Activated T-helper 1 cell treated with anti-CD3 and anti-CD28 coated beads, Interleukin-12 subunit alpha, Interleukin-12 subunit beta, Interleukin-2, Interleukin-4 antibody, amounts not matched to agents 30 ng/mL and 10 ng/mL and 1 ng/mL, durations not matched to agents 14 hours and 24 hours and 36 hours (primary cell): ENCODE measurements at regions of chr10 and their contacts with region 1.

Region 1: DNA sequence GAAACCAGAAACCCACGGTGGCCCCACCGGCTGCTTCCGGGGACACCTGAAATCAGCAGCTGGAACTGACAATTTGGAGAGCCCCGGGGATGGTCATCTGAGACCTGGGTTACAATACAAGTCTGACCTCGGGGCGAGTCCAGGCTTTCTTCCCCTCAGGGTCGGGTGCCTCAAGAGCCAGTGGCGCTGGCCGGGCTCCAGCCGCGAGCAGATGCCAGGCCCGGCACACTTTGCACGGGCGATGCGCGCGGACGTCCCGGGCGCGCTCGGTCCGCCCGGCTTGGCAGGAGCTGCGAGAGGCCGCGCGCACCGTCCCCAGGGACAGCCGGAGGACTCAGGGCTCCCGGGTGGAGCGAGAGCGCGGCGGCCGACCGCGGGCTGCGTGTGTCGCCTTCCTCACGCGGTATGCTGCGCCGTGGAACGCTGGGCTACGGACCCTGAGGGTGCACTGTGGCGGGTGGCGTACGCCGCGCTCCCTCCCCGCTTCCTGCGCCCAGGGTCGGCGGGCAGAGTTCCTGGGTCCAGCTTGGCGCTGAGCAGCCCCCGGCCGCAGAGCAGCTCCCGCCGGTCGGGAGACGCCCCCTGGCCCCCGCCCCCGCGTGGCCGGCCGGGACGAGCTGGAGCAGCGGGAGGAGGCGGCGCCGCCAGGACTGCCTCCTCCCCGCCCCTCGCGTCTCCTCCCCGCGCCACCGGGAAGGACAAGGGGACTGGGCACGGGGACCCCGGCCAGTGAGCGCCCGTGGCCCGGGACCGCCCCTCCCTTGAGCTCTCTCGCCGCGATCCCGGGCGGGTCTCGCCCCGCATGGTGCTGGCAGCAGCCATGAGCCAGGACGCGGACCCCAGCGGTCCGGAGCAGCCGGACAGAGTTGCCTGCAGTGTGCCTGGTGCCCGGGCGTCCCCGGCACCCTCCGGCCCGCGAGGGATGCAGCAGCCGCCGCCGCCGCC is at the start of gene RBM20:
- DNase-seq: no peak
- H3K4me3 Mint-ChIP-seq: peak within 1 kb of the TSS; percentile 85
- H3K27ac Mint-ChIP-seq: peak within 1 kb of the TSS; percentile 34
- H3K4me1 Mint-ChIP-seq: peaks cover 27% of the 10 kb centered on the region
- H3K27me3 Mint-ChIP-seq: peaks cover 66% of the 10 kb centered on the region
- total RNA-seq, gene RBM20: not detected in 2 replicates

Region 2: DNA sequence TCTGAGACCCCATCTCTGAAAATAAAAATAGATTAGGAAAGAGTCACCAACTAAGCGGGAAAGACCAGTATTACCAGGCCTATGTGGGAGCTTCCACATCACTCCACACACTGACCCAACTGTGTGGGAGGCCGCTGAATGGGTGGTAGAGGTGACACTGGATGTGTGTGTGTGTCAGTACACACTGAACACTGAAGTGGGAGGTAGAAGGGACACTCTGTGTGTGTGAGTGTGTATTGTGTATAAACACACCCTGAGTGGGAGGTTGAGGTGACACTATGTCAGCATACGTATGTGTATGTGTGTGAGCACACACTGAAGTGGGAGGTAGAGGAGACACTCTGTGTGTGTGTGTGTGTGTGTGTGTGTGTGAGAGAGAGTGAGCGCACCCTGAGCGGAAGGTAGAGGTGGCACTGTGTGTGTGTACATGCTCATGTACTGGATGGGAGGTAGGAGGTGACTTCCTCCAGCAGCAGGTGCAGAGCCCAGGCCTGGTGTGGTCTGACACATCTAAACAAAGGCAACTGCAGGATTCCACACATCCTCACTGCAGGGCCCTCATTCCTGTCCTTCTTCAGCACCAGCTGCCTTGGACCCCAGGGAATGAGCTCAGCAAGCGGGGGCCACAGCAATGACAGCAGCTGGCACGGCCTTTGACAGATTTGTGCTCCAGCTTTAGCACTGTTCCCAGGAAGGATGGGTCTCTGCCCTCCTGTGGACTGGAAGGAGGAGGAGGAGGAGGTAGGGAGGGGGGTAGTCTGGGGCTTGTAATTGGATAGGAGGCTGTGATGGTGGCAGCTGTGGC is 26.3 kb before region 1 on chr10:
- intact Hi-C with region 1: loop called (anchors 2 kb)
- DNase-seq: no peak
- H3K4me3 Mint-ChIP-seq: peak overlapping the region; percentile 47
- H3K27ac Mint-ChIP-seq: peak overlapping the region; percentile 93
- H3K4me1 Mint-ChIP-seq: peaks cover 60% of the 10 kb centered on the region
- H3K27me3 Mint-ChIP-seq: peaks cover 7% of the 10 kb centered on the region

Region 3: DNA sequence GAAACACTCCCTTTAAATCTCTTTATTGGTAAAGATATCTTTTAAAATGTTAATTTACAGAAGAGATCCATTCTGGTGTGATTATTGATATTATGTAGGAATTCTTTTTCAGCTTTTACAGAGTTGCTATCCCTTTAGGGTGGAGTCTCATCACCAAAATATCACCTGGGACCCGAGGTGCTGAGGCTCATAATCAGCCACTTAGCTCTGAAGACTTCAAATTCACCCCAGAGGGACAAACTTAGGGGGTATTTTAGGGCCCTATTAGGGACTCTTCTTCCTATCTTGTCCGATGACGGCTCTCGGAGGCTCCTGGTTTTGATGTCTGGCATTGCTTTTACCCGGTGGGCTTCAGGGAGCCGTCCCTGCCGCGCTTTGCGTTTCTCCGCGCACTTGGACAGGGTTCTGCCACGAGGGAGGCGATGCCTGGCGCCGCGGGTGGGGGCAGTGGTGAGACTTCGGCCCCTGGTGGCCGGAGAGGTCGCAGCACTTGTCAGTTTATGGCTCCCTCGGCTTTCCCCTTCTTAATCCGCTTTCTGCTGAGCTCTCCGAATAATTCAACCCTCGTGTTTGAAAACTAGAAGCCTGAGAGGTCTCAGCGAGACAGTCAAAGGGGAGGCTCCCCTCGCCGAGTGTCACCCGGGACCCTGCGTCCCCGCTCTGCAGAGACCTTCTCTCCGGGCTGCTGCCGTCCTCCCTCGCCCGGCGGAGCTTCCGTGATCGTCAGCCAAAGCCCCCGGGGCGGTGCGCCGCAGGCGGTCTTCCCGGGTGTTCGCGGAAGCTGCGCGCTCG is 28.1 kb after region 1 on chr10:
- intact Hi-C with region 1: loop called (anchors 1 kb)
- DNase-seq: peak; percentile 44
- H3K4me3 Mint-ChIP-seq: peak overlapping the region; percentile 81
- H3K27ac Mint-ChIP-seq: peak overlapping the region; percentile 36
- H3K4me1 Mint-ChIP-seq: peaks cover 5% of the 10 kb centered on the region
- H3K27me3 Mint-ChIP-seq: peaks cover 54% of the 10 kb centered on the region

Region 4: GRCh38 chr10:110733218-110733952 is 89.5 kb after region 1 on chr10:
- intact Hi-C with region 1: no loop called
- DNase-seq: no peak
- H3K4me3 Mint-ChIP-seq: peak overlapping the region; percentile 16
- H3K27ac Mint-ChIP-seq: no peak overlapping the region
- H3K4me1 Mint-ChIP-seq: peaks cover 9% of the 10 kb centered on the region
- H3K27me3 Mint-ChIP-seq: peaks cover 34% of the 10 kb centered on the region

Region 5: DNA sequence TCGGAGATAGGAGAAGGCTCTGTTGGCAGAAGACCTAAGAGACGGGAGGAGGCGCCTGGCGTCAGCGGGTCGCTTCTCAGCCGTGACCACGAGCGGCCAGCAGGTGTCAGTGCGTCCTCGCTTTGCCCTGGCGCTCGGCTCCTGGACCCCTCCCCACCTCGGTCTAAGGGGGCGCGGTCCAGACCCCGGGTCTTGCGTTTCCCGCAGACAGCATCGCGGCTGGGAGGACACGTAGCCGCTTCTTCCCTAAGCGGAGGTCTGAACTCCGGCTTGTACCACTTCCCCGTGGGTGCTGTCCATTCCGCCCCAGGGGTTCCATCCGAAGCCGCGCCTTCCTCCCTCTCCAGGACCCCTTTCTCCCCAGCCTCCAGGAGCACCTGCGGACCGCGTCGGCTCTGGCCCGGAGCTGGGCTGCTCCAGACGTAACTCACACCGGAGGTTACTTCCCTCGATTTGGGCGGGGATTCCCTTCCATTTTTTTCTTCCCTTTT is 432.3 kb after region 1 on chr10:
- intact Hi-C with region 1: loop called (anchors 2 kb)
- DNase-seq: peak; percentile 15
- H3K4me3 Mint-ChIP-seq: peak overlapping the region; percentile 19
- H3K27ac Mint-ChIP-seq: no peak overlapping the region
- H3K4me1 Mint-ChIP-seq: no peaks in the 10 kb centered on the region
- H3K27me3 Mint-ChIP-seq: peaks cover 58% of the 10 kb centered on the region